CD4-positive, alpha-beta T cell (primary cell): ENCODE measurements at regions of chr9 and their contacts with region 1.

Region 1: GRCh38 chr9:2857564-2858198 is 13.8 kb upstream of the PUM3 start:
- DNase-seq: peak; percentile 30 to 80 (median 48)
- ATAC-seq: peak; percentile 78
- H3K4me3 ChIP-seq: no peak overlapping the region
- H3K4me3 Mint-ChIP-seq: no peak overlapping the region
- H3K27ac ChIP-seq: no peak overlapping the region
- H3K27ac Mint-ChIP-seq: no peak overlapping the region
- H3K4me1 ChIP-seq: no peaks in the 10 kb centered on the region
- H3K4me1 Mint-ChIP-seq: no peaks in the 10 kb centered on the region
- H3K27me3 ChIP-seq: peaks cover 0 to 5% of the 10 kb centered on the region in 2 experiments
- H3K27me3 Mint-ChIP-seq: peaks cover 52% of the 10 kb centered on the region
- CTCF ChIP-seq: peak; percentile 84

Region 2: DNA sequence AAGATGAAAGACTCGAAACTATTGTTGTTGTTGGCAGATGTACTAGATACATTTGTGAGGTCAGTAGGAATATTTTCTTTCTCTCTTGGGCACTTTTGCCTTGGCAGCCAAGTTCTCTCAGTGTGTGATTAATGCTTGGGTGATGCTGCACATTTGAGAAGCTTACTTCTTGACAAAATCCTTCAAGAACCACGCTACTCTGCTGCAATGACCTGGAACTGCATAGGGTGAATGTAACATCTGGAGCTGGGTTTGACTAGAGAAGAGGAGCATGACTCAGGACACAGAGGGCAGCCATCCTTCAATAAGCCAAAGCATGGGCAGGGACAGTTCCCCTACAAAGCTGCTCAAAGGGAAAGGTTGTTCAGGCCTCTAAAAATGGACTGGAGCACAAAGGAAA is 61.7 kb after region 1 on chr9:
- CTCF ChIA-PET with region 1: no interaction called
- POLR2A ChIA-PET with region 1: no interaction called
- intact Hi-C with region 1: no loop called
- DNase-seq: no peak
- ATAC-seq: no peak
- H3K4me3 ChIP-seq: no peak overlapping the region
- H3K4me3 Mint-ChIP-seq: no peak overlapping the region
- H3K27ac ChIP-seq: no peak overlapping the region
- H3K27ac Mint-ChIP-seq: no peak overlapping the region
- H3K4me1 ChIP-seq: no peaks in the 10 kb centered on the region
- H3K4me1 Mint-ChIP-seq: no peaks in the 10 kb centered on the region
- H3K27me3 ChIP-seq: peaks cover 0 to 5% of the 10 kb centered on the region in 2 experiments
- H3K27me3 Mint-ChIP-seq: peaks cover 13% of the 10 kb centered on the region
- CTCF ChIP-seq: no peak

Region 3: GRCh38 chr9:3181049-3181953 is 323.6 kb after region 1 on chr9:
- CTCF ChIA-PET with region 1: no interaction called
- POLR2A ChIA-PET with region 1: no interaction called
- intact Hi-C with region 1: loop called in 1 of 2 experiments (anchors 10 kb)
- DNase-seq: peak in 11 of 14 experiments; percentile 1 to 50 (median 13)
- ATAC-seq: peak; percentile 34
- H3K4me3 ChIP-seq: peak overlapping the region; percentile 22
- H3K4me3 Mint-ChIP-seq: no peak overlapping the region
- H3K27ac ChIP-seq: no peak overlapping the region
- H3K27ac Mint-ChIP-seq: no peak overlapping the region
- H3K4me1 ChIP-seq: peaks cover 7% of the 10 kb centered on the region
- H3K4me1 Mint-ChIP-seq: no peaks in the 10 kb centered on the region
- H3K27me3 ChIP-seq: peaks cover 21 to 23% of the 10 kb centered on the region in 2 experiments
- H3K27me3 Mint-ChIP-seq: peaks cover 48% of the 10 kb centered on the region
- CTCF ChIP-seq: no peak

Region 4: GRCh38 chr9:3323714-3324113 is 466.0 kb after region 1 on chr9:
- CTCF ChIA-PET with region 1: no interaction called
- POLR2A ChIA-PET with region 1: no interaction called
- intact Hi-C with region 1: no loop called
- DNase-seq: no peak
- ATAC-seq: no peak
- H3K4me3 ChIP-seq: no peak overlapping the region
- H3K4me3 Mint-ChIP-seq: no peak overlapping the region
- H3K27ac ChIP-seq: no peak overlapping the region
- H3K27ac Mint-ChIP-seq: no peak overlapping the region
- H3K4me1 ChIP-seq: no peaks in the 10 kb centered on the region
- H3K4me1 Mint-ChIP-seq: no peaks in the 10 kb centered on the region
- H3K27me3 ChIP-seq: no peaks in the 10 kb centered on the region
- H3K27me3 Mint-ChIP-seq: no peaks in the 10 kb centered on the region
- CTCF ChIP-seq: no peak

Region 5: GRCh38 chr9:3441197-3441816 is 583.6 kb after region 1 on chr9:
- CTCF ChIA-PET with region 1: no interaction called
- POLR2A ChIA-PET with region 1: no interaction called
- intact Hi-C with region 1: loop called (anchors 5 kb)
- DNase-seq: peak in 13 of 14 experiments; percentile 7 to 72 (median 29)
- ATAC-seq: peak; percentile 88
- H3K4me3 ChIP-seq: no peak overlapping the region
- H3K4me3 Mint-ChIP-seq: no peak overlapping the region
- H3K27ac ChIP-seq: no peak overlapping the region
- H3K27ac Mint-ChIP-seq: no peak overlapping the region
- H3K4me1 ChIP-seq: no peaks in the 10 kb centered on the region
- H3K4me1 Mint-ChIP-seq: peaks cover 12% of the 10 kb centered on the region
- H3K27me3 ChIP-seq: no peaks in the 10 kb centered on the region
- H3K27me3 Mint-ChIP-seq: no peaks in the 10 kb centered on the region
- CTCF ChIP-seq: peak; percentile 62

Region 6: DNA sequence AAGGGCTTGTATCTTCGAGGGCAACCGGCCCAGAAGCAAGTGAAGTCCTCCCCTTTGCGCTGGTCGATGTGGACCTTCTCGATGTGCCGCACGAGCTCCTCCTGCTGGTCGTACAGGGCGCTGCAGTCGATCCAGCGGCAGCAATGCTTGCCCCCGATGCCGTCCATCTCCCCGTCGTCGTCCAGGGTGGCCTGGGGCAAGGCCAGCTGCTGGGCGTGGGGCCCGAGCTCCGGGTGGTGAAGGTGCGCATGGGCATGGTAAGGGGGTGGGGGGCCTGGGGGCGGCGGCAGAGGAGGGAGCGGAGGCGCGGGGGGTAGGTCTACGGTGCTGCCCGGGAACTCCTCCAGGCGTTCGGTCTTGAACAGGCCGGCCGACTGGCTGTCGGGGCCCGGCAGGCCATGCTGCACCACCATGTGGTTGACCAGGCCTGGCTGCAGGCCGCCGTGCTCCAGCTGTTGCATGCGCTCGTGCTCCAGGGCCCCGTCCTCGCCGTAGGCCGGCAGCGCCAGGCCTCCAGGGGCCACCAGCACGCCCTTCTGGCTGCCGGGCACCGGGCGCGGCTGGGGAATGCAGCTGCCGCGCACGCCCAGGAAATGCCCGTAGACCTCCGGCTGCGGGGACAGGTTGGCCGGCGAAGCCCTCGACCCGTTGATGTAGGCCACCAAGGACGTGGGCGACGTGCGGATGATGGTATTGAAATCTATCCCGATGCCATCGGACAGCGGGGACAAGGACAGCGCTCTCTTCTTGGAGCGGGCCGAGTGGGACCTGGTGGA is 1260.3 kb after region 1 on chr9:
- CTCF ChIA-PET with region 1: no interaction called
- POLR2A ChIA-PET with region 1: no interaction called
- intact Hi-C with region 1: loop called in 1 of 2 experiments (anchors 5 kb)
- DNase-seq: peak; percentile 11 to 58 (median 28)
- ATAC-seq: no peak
- H3K4me3 ChIP-seq: no peak overlapping the region
- H3K4me3 Mint-ChIP-seq: no peak overlapping the region
- H3K27ac ChIP-seq: no peak overlapping the region
- H3K27ac Mint-ChIP-seq: no peak overlapping the region
- H3K4me1 ChIP-seq: no peaks in the 10 kb centered on the region
- H3K4me1 Mint-ChIP-seq: no peaks in the 10 kb centered on the region
- H3K27me3 ChIP-seq: no peaks in the 10 kb centered on the region
- H3K27me3 Mint-ChIP-seq: no peaks in the 10 kb centered on the region
- CTCF ChIP-seq: peak; percentile 48

Region 7: GRCh38 chr9:4339357-4339756 is 1481.7 kb after region 1 on chr9:
- CTCF ChIA-PET with region 1: no interaction called
- POLR2A ChIA-PET with region 1: no interaction called
- intact Hi-C with region 1: loop called (anchors 2 kb)
- DNase-seq: peak; percentile 65 to 85 (median 75)
- ATAC-seq: peak; percentile 94
- H3K4me3 ChIP-seq: no peak overlapping the region
- H3K4me3 Mint-ChIP-seq: peak overlapping the region; percentile 26
- H3K27ac ChIP-seq: no peak overlapping the region
- H3K27ac Mint-ChIP-seq: peak overlapping the region; percentile 44
- H3K4me1 ChIP-seq: peaks cover 4% of the 10 kb centered on the region
- H3K4me1 Mint-ChIP-seq: peaks cover 7% of the 10 kb centered on the region
- H3K27me3 ChIP-seq: no peaks in the 10 kb centered on the region
- H3K27me3 Mint-ChIP-seq: no peaks in the 10 kb centered on the region
- CTCF ChIP-seq: peak; percentile 85

Region 8: DNA sequence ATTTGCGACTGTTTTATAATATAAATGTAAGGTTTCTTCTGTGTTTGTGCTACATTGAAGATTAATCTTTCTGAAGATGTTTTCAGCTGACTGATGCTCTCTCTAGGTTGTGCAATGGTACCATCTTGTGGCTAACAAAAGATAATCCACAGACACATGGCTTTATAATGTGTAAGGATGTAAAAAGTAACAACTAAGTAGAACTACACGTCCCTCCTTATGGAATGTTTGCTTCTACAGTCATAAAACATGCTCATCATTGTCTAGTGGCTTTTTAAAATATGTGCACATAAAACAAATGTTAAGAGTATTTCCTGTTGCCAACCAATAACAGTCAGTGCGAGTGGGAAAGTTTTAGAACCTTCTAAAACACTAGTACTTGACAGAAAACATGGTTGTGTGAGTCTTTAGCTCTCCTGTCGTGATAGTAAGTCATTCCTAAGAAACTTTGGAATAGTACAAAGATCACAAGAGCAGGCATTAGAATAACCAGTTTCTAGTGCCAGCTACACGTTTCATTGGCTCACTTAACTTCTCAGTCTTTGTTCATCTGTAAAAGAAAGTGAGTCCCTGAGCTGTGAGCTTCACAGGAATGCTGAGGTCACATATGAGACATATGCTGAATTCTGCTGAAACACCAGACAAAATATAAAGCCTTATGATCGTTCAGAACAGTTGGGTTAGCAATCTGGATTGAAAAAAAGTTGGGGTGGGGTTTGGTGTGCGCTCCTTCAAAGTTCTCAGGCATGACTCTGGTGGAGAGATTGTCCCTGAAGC is 1517.9 kb after region 1 on chr9:
- CTCF ChIA-PET with region 1: no interaction called
- POLR2A ChIA-PET with region 1: no interaction called
- intact Hi-C with region 1: loop called (anchors 2 kb)
- DNase-seq: peak in 3 of 14 experiments; percentile 14 to 45 (median 36)
- ATAC-seq: no peak
- H3K4me3 ChIP-seq: no peak overlapping the region
- H3K4me3 Mint-ChIP-seq: no peak overlapping the region
- H3K27ac ChIP-seq: no peak overlapping the region
- H3K27ac Mint-ChIP-seq: no peak overlapping the region
- H3K4me1 ChIP-seq: no peaks in the 10 kb centered on the region
- H3K4me1 Mint-ChIP-seq: no peaks in the 10 kb centered on the region
- H3K27me3 ChIP-seq: no peaks in the 10 kb centered on the region
- H3K27me3 Mint-ChIP-seq: peaks cover 15% of the 10 kb centered on the region
- CTCF ChIP-seq: no peak